ENCODE measurements at regions of chr18 and their contacts with region 1.

Region 1: DNA sequence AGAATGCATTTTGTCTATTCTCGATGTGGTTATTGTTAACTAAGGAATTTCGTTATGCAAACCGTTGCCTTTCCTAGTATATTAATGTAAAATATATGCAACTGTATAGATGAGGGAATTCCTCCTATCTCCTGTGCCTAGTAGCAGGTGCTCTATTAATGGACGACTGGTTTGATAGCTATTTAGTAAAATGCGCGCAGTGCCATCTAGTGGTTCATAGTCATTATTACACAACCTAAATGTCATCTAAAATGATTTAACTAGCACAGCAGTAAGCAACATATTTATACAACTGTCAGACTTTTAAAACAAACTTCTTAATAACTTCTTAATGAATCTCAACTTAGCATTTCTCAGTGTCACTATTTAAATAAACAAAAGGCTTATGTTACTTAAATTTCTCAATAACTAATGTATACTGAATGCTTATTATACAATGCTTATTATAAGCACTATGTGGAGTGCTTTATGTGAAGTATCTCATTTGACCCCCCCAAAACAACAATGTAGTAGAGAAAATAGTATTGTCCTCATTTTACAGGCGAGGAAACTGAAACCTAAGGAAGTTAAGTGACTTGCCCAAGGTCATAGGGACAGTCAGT is 77.9 kb downstream of the DTNA start:
- DNase-seq: no peak
- ATAC-seq: peak; percentile 30
- H3K4me3 Mint-ChIP-seq: no peak overlapping the region
- H3K27ac Mint-ChIP-seq: no peak overlapping the region
- H3K4me1 Mint-ChIP-seq: peaks cover 3% of the 10 kb centered on the region
- H3K27me3 Mint-ChIP-seq: peaks cover 11% of the 10 kb centered on the region

Region 2: GRCh38 chr18:34122724-34123334 is 665.2 kb before region 1 on chr18:
- CTCF ChIA-PET with region 1: interaction called, 13 read pairs
- DNase-seq: no peak
- ATAC-seq: no peak
- H3K4me3 Mint-ChIP-seq: no peak overlapping the region
- H3K27ac Mint-ChIP-seq: no peak overlapping the region
- H3K4me1 Mint-ChIP-seq: no peaks in the 10 kb centered on the region
- H3K27me3 Mint-ChIP-seq: no peaks in the 10 kb centered on the region

Measured in activated CD8-positive, alpha-beta memory T cell treated with anti-CD3 and anti-CD28 coated beads, Interleukin-2, amount 10 ng/mL, durations not matched to agents 7 days and 5 days (primary cell).